Left ventricle myocardium inferior (tissue), 1 donor: ENCODE measurements at regions of chr17 and their contacts with region 1.

Region 1: GRCh38 chr17:14300575-14301278 is at the start of gene HS3ST3B1:
- DNase-seq: peak; percentile 98
- H3K4me3 ChIP-seq: peak within 1 kb of the TSS; percentile 76
- H3K27ac ChIP-seq: peak within 1 kb of the TSS; percentile 84
- H3K4me1 ChIP-seq: peaks cover 82% of the 10 kb centered on the region
- H3K27me3 ChIP-seq: peaks cover 97% of the 10 kb centered on the region
- CTCF ChIP-seq: no peak
- total RNA-seq, gene HS3ST3B1: 1.2 TPM

Region 2: DNA sequence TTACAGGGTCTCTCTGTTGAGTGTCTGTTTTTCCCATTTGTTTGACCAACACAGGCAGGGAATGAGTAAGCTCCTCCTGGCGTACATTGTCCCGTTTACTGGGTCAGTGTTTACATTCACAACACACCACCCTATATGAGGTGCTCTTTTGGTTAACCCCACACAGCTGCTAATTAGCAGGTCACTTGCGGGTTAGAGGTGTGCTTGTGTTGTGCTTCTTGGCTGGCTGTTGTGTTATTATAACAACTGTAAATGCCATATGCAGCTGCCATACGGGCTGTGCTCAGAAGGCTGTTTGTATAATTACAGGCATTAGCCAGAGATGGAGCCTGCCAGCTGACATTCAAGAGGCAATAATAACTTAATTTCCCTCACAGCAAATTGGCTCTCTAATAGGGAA is 1077.8 kb before region 1 on chr17:
- intact Hi-C with region 1: no loop called
- DNase-seq: no peak
- H3K4me3 ChIP-seq: no peak overlapping the region
- H3K27ac ChIP-seq: no peak overlapping the region
- H3K4me1 ChIP-seq: no peaks in the 10 kb centered on the region
- H3K27me3 ChIP-seq: peaks cover 9% of the 10 kb centered on the region
- CTCF ChIP-seq: no peak

Region 3: DNA sequence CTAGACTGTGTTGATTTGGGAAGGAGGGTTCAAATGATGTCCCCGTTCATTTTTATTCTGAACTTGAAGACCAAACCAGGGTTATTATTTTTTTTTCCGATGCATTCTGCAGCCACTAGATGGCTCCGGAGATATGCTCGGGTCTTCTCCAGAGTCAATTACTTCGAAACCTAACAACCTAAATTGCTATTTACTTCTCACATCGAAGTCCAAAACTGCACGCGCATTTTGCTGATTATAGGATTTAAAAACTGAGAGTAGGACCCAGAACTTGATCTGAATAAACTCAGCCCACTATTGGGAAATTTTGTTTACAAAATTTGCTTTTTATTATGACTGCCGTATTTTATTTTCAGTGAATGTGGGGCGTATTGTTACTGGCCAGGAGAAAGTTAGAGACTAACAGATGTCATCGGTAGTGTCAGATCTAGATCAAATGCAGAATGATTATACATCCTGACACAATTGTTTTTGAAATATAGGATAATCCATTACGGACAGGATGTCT is 962.8 kb before region 1 on chr17:
- intact Hi-C with region 1: loop called (anchors 10 kb)
- DNase-seq: no peak
- H3K4me3 ChIP-seq: peak overlapping the region; percentile 55
- H3K27ac ChIP-seq: no peak overlapping the region
- H3K4me1 ChIP-seq: no peaks in the 10 kb centered on the region
- H3K27me3 ChIP-seq: peaks cover 5% of the 10 kb centered on the region
- CTCF ChIP-seq: peak; percentile 81

Region 4: GRCh38 chr17:13594762-13595598 is 705.7 kb before region 1 on chr17:
- intact Hi-C with region 1: loop called (anchors 5 kb)
- DNase-seq: peak; percentile 27
- H3K4me3 ChIP-seq: no peak overlapping the region
- H3K27ac ChIP-seq: no peak overlapping the region
- H3K4me1 ChIP-seq: peaks cover 20% of the 10 kb centered on the region
- H3K27me3 ChIP-seq: peaks cover 17% of the 10 kb centered on the region
- CTCF ChIP-seq: peak; percentile 88

Region 5: GRCh38 chr17:14225254-14225980 is 75.3 kb before region 1 on chr17:
- intact Hi-C with region 1: no loop called
- DNase-seq: no peak
- H3K4me3 ChIP-seq: no peak overlapping the region
- H3K27ac ChIP-seq: no peak overlapping the region
- H3K4me1 ChIP-seq: no peaks in the 10 kb centered on the region
- H3K27me3 ChIP-seq: no peaks in the 10 kb centered on the region
- CTCF ChIP-seq: no peak

Region 6: GRCh38 chr17:14245020-14245419 is 55.7 kb before region 1 on chr17:
- intact Hi-C with region 1: no loop called
- DNase-seq: no peak
- H3K4me3 ChIP-seq: no peak overlapping the region
- H3K27ac ChIP-seq: no peak overlapping the region
- H3K4me1 ChIP-seq: no peaks in the 10 kb centered on the region
- H3K27me3 ChIP-seq: peaks cover 11% of the 10 kb centered on the region
- CTCF ChIP-seq: no peak